ENCODE measurements at regions of chr16 and their contacts with region 1.

Region 1: DNA sequence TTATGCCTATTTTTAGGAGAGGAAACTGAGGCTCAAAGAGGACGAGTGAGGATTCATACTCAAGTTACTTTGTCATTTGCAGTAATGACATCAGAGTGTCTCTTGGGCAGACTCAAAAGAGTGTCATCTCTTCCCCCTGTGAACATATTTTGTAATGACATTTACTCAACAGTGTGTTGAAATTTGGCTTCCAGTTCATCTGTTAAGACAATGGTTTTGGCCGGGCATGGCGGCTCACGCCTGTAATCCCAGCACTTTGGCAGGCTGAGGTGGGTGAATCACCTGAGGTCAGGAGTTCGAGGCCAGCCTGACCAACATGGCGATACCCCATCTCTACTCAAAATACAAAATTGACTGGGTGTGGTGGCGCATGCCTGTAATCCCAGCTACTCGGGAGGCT is 28.9 kb downstream of the WFDC1 start:
- DNase-seq: no peak
- H3K4me3 Mint-ChIP-seq: no peak overlapping the region
- H3K27ac Mint-ChIP-seq: no peak overlapping the region
- H3K4me1 Mint-ChIP-seq: no peaks in the 10 kb centered on the region
- H3K27me3 Mint-ChIP-seq: no peaks in the 10 kb centered on the region

Region 2: DNA sequence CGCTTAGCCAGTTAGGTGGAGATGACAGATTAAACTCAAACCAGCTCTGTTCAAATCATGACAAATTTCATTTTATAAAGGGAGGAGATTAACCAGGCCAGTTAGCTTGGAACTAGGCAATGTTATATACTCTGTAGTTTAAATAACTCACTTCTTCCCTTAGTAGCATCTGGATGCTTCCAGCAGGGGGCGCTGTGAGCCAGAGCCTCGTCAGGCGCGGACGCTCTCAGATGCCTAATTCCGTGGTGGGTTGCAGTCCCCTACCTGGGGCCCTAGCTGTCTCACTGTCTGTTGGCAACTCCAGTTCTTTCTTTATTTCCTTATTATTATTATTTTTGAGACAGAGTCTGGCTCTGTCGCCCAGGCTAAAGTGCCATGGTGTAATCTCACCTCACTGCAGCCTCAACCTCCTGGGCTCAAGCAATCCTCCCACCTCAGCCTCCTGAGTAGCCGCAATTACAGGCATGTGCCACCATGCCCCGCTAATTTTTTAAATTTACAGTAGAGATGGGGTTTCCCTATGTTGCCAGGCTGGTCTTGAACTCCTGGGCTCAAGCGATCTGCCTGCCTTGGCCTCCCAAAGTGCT is 46.3 kb before region 1 on chr16:
- intact Hi-C with region 1: no loop called
- DNase-seq: peak; percentile 57
- H3K4me3 Mint-ChIP-seq: no peak overlapping the region
- H3K27ac Mint-ChIP-seq: no peak overlapping the region
- H3K4me1 Mint-ChIP-seq: no peaks in the 10 kb centered on the region
- H3K27me3 Mint-ChIP-seq: peaks cover 3% of the 10 kb centered on the region

Region 3: DNA sequence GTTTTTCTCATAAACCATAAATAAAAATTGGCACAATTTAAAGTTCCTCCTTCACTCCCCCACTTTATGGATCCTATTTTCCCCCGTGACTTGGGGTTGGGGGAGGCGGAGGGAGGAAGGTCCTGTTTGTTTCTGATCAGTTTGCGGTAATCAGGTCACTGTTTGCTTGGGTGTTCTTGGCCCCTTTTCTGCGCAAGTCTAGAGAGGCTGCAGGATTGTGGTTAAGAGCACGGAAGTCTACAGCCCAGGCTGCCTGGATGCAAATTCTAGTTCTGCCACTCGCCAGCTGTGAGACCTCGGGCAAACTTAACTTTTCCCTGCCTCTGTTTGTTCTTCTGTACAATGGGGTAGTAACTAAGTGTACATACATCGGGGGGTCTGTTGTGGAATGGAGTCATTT is 56.8 kb after region 1 on chr16:
- intact Hi-C with region 1: loop called (anchors 10 kb)
- DNase-seq: no peak
- H3K4me3 Mint-ChIP-seq: no peak overlapping the region
- H3K27ac Mint-ChIP-seq: no peak overlapping the region
- H3K4me1 Mint-ChIP-seq: peaks cover 2% of the 10 kb centered on the region
- H3K27me3 Mint-ChIP-seq: peaks cover 15% of the 10 kb centered on the region

Region 4: DNA sequence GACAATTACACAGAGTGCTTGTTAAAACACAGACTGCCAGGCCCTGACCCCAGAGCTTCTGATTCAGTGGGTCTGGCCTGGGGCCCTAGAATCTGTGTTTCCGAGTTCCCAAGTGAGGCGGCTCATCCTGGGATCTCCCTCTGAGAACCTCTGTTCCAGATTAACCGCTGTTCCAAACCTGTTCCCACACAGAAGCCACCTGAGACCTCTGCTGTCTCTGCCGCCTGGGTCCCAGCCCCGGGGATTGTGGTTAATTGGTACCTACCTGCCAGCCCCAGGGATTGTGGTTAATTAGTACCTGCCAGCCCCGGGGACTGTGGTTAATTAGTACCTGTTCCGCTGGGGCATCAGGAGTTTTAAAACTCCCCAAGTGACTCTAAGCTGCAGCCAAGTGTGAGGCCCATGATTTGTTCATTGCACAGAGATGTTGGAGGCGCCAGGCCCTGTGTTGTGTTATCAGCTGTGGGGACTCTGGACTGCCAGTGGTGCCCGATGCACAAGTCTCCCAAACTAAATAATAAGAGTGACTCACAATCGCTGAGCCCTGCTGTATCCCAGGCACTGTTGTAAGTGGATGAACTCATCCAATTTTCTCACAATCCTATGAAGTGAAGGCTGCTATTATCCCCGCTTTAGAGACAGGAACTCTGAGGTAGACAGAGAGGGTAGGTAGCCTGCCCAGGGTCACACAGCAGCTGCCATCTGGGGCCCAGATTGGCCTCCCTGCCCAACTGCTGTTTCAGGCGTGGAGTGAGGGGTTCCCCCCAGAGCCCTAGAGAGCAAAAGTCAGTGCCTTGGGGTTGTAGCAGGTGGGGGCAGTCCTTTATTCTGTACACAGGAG is 1795.1 kb after region 1 on chr16:
- intact Hi-C with region 1: no loop called
- DNase-seq: no peak
- H3K4me3 Mint-ChIP-seq: no peak overlapping the region
- H3K27ac Mint-ChIP-seq: no peak overlapping the region
- H3K4me1 Mint-ChIP-seq: peaks cover 4% of the 10 kb centered on the region
- H3K27me3 Mint-ChIP-seq: peaks cover 12% of the 10 kb centered on the region

Measured in activated T-helper 2 cell treated with anti-CD3 and anti-CD28 coated beads, Interferon-gamma antibody, Interleukin-2, Interleukin-4, amounts not matched to agents 10 μg/mL and 5 μg/mL and 100 μg/mL, durations not matched to agents 14 hours and 24 hours and 36 hours (primary cell).